ENCODE measurements at regions of chr3 and their contacts with region 1.

Region 1: GRCh38 chr3:153768561-153769469 is 352.4 kb upstream of the ARHGEF26 start:
- DNase-seq: peak; percentile 84
- H3K4me3 ChIP-seq: no peak overlapping the region
- H3K27ac ChIP-seq: no peak overlapping the region
- H3K4me1 ChIP-seq: peaks cover 30% of the 10 kb centered on the region
- CTCF ChIP-seq: peak; percentile 95

Region 2: DNA sequence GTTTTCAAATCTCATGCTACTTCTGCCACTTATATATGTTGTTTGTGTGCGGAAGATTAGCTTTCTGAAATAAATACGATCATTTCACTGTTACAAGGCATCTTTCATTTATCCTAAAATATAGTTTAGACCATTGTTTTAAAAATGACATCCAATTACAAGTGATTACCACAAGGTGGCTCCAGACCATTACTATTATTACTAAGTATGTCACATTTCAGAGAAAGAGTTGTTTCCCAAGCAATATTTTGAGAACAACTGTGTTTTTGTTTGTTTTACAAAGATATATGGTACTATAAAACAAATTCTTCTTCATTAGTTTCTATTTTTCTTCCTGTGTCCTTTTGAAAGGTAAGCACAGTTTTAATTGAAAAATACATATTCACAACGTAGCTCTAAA is 742.8 kb before region 1 on chr3:
- CTCF ChIA-PET with region 1: no interaction called
- POLR2A ChIA-PET with region 1: no interaction called
- intact Hi-C with region 1: loop called (anchors 5 kb)
- DNase-seq: peak; percentile 52
- H3K4me3 ChIP-seq: no peak overlapping the region
- H3K27ac ChIP-seq: no peak overlapping the region
- H3K4me1 ChIP-seq: no peaks in the 10 kb centered on the region
- CTCF ChIP-seq: peak; percentile 91

Region 3: DNA sequence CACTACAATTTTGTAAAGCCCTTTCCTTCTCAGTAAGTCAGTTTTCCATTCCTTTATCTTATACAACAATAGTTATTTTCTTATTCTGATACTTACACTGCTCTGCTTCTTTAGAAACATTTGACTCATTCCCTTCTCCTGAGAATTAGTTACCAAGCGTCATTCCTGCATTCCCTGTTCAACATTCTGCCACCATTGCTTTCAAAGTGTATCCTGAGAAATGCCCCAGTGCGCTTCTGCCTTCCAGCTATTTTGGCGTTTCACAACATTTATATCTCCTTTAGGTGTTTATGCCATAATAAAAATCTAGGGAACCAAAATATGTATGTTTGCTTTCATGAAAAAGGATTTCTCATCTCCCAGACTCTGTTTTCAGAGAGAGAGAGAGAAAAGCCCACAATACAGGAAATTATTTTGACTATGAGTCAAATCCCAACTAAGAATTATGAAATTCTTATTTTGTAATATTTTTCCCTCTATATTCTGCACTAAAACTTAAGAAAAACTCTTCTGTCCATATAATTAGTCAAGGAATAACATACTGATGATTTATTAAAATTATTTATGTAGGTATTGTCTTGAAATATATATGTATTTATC is 725.0 kb before region 1 on chr3:
- CTCF ChIA-PET with region 1: no interaction called
- POLR2A ChIA-PET with region 1: interaction called, 3 read pairs
- intact Hi-C with region 1: loop called (anchors 2 kb)
- DNase-seq: no peak
- H3K4me3 ChIP-seq: no peak overlapping the region
- H3K27ac ChIP-seq: no peak overlapping the region
- H3K4me1 ChIP-seq: no peaks in the 10 kb centered on the region
- CTCF ChIP-seq: no peak

Region 4: DNA sequence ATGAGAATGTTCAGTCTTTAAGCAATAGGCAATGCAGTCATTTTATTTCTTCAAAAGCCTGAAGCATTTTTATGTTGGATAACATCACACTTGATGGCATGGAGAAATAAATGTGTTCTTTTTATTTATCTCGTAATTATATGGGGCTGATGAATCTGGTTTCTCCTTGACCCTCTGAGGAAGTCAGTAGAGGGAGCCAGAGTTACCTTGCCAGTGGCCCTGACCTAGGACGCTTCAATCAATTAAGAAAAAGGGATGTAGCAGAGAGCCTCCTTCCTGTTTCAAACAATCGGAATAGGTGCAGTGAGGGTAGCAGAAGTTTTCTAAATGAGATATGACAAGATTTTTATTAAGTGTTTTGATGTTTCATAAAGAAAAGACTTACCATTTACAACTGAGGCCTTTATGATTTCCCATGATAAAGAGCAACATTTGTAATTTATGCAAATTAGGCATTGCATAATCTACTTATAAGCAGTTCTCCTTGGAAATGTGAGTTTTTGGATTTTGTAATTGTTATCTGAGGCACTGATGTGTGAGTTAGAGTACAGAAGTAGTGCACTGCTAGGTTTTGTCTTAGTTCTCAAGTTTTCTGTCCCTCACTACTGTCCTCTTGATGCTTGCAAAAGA is 477.6 kb before region 1 on chr3:
- CTCF ChIA-PET with region 1: no interaction called
- POLR2A ChIA-PET with region 1: no interaction called
- intact Hi-C with region 1: loop called (anchors 1 kb)
- DNase-seq: peak; percentile 58
- H3K4me3 ChIP-seq: no peak overlapping the region
- H3K27ac ChIP-seq: no peak overlapping the region
- H3K4me1 ChIP-seq: no peaks in the 10 kb centered on the region
- CTCF ChIP-seq: peak; percentile 83

Region 5: DNA sequence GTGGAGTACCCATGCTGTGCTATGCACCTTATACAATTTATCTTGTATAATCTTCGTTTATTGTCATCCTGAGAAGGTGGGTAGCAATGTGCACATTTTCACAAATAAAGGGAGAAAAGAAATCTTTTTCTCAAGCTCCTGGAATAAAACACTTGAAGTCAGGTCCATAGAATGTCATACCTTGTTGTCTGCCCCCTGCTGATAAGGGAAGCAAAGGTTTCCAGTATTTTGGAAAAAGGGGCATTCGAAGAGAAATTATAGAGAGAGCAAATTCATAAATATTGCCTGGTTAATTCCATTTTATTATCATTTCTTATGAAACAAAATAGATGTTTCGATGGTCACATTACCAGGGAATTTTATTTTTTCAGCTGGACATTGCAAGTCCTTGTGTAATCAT is 329.0 kb before region 1 on chr3:
- CTCF ChIA-PET with region 1: no interaction called
- POLR2A ChIA-PET with region 1: no interaction called
- intact Hi-C with region 1: loop called (anchors 5 kb)
- DNase-seq: no peak
- H3K4me3 ChIP-seq: no peak overlapping the region
- H3K27ac ChIP-seq: no peak overlapping the region
- H3K4me1 ChIP-seq: no peaks in the 10 kb centered on the region
- CTCF ChIP-seq: 0 out of 2 replicates have a peak, but pooled peaks have one; percentile 17

Region 6: GRCh38 chr3:153547970-153548369 is 220.8 kb before region 1 on chr3:
- CTCF ChIA-PET with region 1: no interaction called
- POLR2A ChIA-PET with region 1: no interaction called
- intact Hi-C with region 1: no loop called
- DNase-seq: no peak
- H3K4me3 ChIP-seq: no peak overlapping the region
- H3K27ac ChIP-seq: no peak overlapping the region
- H3K4me1 ChIP-seq: no peaks in the 10 kb centered on the region
- CTCF ChIP-seq: no peak

Region 7: GRCh38 chr3:153704115-153704514 is 64.7 kb before region 1 on chr3:
- CTCF ChIA-PET with region 1: no interaction called
- POLR2A ChIA-PET with region 1: interaction called, 3 read pairs
- intact Hi-C with region 1: loop called (anchors 1 kb)
- DNase-seq: peak; percentile 29
- H3K4me3 ChIP-seq: no peak overlapping the region
- H3K27ac ChIP-seq: no peak overlapping the region
- H3K4me1 ChIP-seq: peaks cover 5% of the 10 kb centered on the region
- CTCF ChIP-seq: peak; percentile 38; the same call in 1 of the 2 replicates

Region 8: GRCh38 chr3:153714588-153715290 is 54.1 kb before region 1 on chr3:
- CTCF ChIA-PET with region 1: no interaction called
- POLR2A ChIA-PET with region 1: interaction called, 5 read pairs
- intact Hi-C with region 1: loop called (anchors 2 kb)
- DNase-seq: peak; percentile 47
- H3K4me3 ChIP-seq: peak overlapping the region; percentile 22
- H3K27ac ChIP-seq: peak overlapping the region; percentile 47
- H3K4me1 ChIP-seq: peaks cover 30% of the 10 kb centered on the region
- CTCF ChIP-seq: no peak